ENCODE measurements at regions of chr4 and their contacts with region 1.

Region 1: DNA sequence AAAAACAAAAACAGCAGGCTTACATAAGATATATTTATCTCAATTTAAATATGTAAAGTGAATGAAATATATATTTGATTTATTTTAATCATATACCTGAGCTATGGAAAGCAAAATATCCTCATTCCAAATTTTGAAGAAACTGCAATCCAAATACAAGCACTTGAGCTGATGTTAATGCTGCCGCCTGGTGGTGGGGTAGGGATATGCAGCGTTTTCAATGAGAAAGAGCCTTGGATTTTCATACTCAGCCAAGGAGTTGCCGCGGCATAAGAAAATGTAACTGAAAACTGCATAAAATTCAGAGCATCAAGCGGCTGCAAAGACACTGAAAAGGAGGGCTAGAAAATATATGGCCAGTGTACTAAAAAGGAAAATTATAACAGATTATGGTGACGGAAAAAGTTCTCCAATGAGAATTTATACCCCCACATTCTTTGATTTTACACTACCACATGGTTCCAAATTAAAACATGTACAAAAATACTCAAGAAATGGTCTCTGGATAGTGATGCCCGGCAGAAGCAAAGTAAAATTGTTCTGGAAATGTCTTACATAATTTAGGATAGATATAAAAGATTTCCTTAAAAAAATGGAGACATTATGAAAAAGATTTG is 660.3 kb upstream of the PITX2 start:
- DNase-seq: peak in 4 of 5 donors; percentile 23 to 56 (median 27)
- ATAC-seq: no peak
- H3K4me3 ChIP-seq: no peak overlapping the region
- H3K27ac ChIP-seq: no peak overlapping the region
- H3K4me1 ChIP-seq: no peaks in the 10 kb centered on the region
- H3K27me3 ChIP-seq: peaks cover 0 to 6% (median 0%) of the 10 kb centered on the region in 9 donors
- CTCF ChIP-seq: peak; percentile 55 to 75 (median 65)
- POLR2A ChIP-seq: no peak

Region 2: GRCh38 chr4:110663738-110664444 is 619.3 kb before region 1 on chr4:
- intact Hi-C with region 1: no loop called
- DNase-seq: no peak
- ATAC-seq: no peak
- H3K4me3 ChIP-seq: no peak overlapping the region
- H3K27ac ChIP-seq: no peak overlapping the region
- H3K4me1 ChIP-seq: no peaks in the 10 kb centered on the region
- H3K27me3 ChIP-seq: peaks cover 0 to 10% (median 0%) of the 10 kb centered on the region in 9 donors
- CTCF ChIP-seq: no peak
- POLR2A ChIP-seq: no peak

Region 3: GRCh38 chr4:111466811-111467604 is 183.8 kb after region 1 on chr4:
- intact Hi-C with region 1: loop called in 3 of 10 experiments (anchors 10 kb)
- DNase-seq: no peak
- ATAC-seq: no peak
- H3K4me3 ChIP-seq: no peak overlapping the region
- H3K27ac ChIP-seq: no peak overlapping the region
- H3K4me1 ChIP-seq: no peaks in the 10 kb centered on the region
- H3K27me3 ChIP-seq: no peaks in the 10 kb centered on the region
- CTCF ChIP-seq: no peak
- POLR2A ChIP-seq: no peak

Measured in heart left ventricle (tissue), 16 donors.